ENCODE measurements at regions of chr14 and their contacts with region 1.

Region 1: DNA sequence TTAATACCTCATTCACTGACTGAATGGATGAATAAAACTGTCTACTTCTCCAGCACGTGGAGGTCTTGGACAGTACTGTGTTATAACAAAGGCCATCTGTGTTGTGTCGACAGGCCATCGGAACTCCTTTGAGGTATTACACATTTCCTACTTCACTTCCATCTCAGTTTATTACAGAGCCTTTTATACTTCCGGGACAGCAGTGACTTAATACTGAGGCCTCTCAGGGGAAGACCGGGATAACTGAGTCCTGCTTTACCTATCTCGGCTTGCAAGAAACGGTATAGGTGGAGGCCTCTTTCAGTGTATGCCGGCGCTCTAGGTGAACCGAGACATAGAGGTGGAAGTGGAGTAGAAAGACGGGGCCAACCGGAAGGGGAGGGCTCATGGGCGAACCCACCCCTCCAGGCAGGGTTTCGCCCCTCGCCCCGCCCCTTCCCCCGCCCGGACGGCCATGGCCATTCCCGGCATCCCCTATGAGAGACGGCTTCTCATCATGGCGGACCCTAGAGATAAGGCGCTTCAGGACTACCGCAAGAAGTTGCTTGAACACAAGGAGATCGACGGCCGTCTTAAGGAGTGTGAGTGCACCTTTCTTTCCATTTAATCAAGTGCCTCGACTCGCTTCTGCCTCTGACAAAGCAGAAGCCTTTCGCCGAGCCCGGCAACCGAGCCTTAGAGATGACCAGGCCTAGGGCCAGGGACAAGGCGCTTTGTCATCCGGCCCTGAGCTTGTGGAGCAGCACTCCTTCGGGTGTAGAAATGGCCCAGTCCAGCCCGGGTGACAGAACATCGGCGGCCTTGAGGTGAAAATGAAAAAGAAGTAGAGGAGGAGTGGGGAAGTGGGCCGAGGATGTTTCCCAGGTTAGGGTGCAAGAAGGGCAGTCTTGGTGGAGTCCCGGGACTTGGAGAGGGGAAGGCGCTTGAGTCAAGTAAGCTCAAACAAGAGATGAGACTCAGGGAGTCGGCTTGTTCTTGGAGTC is at the start of gene PSMC6:
- DNase-seq: peak; percentile 88 to 95 (median 90)
- H3K4me3 ChIP-seq: peak within 1 kb of the TSS; percentile 92 to 96
- H3K4me3 Mint-ChIP-seq: peak within 1 kb of the TSS; percentile 92 to 100 (median 96)
- H3K27ac ChIP-seq: peak within 1 kb of the TSS; percentile 77
- H3K27ac Mint-ChIP-seq: peak within 1 kb of the TSS; percentile 94 to 99 (median 98)
- H3K4me1 ChIP-seq: peaks cover 43% of the 10 kb centered on the region
- H3K4me1 Mint-ChIP-seq: peaks cover 20 to 56% (median 36%) of the 10 kb centered on the region in 4 donors
- H3K27me3 ChIP-seq: no peaks in the 10 kb centered on the region
- H3K27me3 Mint-ChIP-seq: no peaks in the 10 kb centered on the region
- total RNA-seq, gene PSMC6: 85.7 to 86.0 TPM

Region 2: GRCh38 chr14:52729925-52730667 is 23.1 kb after region 1 on chr14 and contains the start of gene STYX:
- CTCF ChIA-PET with region 1: interaction called, 3 read pairs
- POLR2A ChIA-PET with region 1: interaction called, 8 read pairs
- intact Hi-C with region 1: loop called (anchors 1 kb)
- DNase-seq: peak; percentile 95 to 97 (median 96)
- H3K4me3 ChIP-seq: peak within 1 kb of the TSS; percentile 71
- H3K4me3 Mint-ChIP-seq: peak within 1 kb of the TSS; percentile 80 to 96 (median 93)
- H3K27ac ChIP-seq: peak within 1 kb of the TSS; percentile 88
- H3K27ac Mint-ChIP-seq: peak within 1 kb of the TSS; percentile 79 to 97 (median 95)
- H3K4me1 ChIP-seq: peaks cover 36% of the 10 kb centered on the region
- H3K4me1 Mint-ChIP-seq: peaks cover 17 to 53% (median 38%) of the 10 kb centered on the region in 4 donors
- H3K27me3 ChIP-seq: no peaks in the 10 kb centered on the region
- H3K27me3 Mint-ChIP-seq: no peaks in the 10 kb centered on the region
- total RNA-seq, gene STYX: 47.1 to 47.3 TPM